Posterior cingulate gyrus (tissue), 11 donors: ENCODE measurements at regions of chr10 and their contacts with region 1.

Region 1: GRCh38 chr10:26251925-26252324 is 35.4 kb downstream of the GAD2 start:
- DNase-seq: no peak

Region 2: GRCh38 chr10:26291721-26292480 is 40.0 kb after region 1 on chr10:
- intact Hi-C with region 1: loop called (anchors 2 kb)
- DNase-seq: no peak